ENCODE measurements at regions of chr3 and their contacts with region 1.

Region 1: DNA sequence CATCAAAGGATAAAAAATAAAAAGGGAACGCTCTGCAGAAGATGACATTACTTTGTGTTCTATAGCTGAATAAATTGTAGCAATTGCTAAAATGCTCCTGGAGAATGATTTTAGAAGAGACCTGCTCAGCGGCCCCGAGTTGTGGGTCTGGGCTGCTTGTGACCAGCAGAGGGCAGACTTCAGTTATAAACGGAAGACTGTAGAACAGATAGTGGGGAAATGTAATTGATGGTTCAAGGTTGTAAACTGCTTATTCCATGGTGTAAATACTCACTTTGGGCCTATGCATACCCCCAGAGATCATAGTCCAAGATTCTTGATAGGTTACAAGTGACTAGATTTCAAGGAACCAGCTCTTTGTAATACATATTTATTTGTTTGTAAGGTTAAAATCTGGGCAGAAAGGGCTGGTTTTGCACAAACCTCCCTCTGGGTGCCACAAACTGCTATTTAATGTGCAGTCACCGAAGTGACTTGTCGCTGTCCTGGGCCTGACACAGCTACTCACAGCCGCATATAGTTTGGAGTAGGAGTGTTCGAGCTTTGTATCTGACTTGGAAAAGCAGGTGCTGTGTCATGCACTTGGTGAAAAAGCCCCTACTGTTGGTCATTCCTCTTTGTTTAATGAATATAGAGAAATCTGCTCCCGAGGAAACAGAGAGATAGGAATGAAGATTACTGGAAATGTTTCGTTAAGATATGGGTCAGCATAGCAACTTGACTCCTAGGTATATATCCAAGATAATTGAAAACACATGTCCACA is 34.7 kb upstream of the NDUFB4 start:
- DNase-seq: peak; percentile 66
- ATAC-seq: peak; percentile 47 to 55
- H3K4me3 ChIP-seq: no peak overlapping the region
- H3K27ac ChIP-seq: no peak overlapping the region
- H3K4me1 ChIP-seq: peaks cover 34% of the 10 kb centered on the region
- H3K27me3 ChIP-seq: no peaks in the 10 kb centered on the region
- CTCF ChIP-seq: peak; percentile 93

Region 2: DNA sequence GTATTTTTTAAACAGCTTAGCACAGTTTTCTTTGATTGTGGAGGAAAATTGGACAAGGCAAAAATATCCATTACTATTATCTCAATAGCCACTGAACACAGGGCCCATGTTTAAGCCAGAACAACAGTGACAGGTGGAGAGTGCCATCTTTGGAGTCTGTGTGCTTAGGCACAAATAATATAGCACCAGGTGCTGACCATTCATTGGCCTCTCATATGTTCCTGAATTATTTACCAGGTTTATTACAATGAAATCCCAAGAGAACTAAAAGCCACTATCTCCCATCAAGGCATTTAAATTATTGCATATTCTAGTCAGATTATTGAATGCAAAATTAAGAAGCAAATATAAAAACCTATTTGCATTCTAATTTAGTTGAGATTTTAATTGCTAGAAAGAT is 316.0 kb before region 1 on chr3:
- intact Hi-C with region 1: loop called (anchors 10 kb)
- DNase-seq: no peak
- ATAC-seq: no peak
- H3K4me3 ChIP-seq: no peak overlapping the region
- H3K27ac ChIP-seq: no peak overlapping the region
- H3K4me1 ChIP-seq: no peaks in the 10 kb centered on the region
- H3K27me3 ChIP-seq: no peaks in the 10 kb centered on the region
- CTCF ChIP-seq: no peak

Region 3: GRCh38 chr3:120661118-120661935 is 99.9 kb after region 1 on chr3:
- intact Hi-C with region 1: no loop called
- DNase-seq: no peak
- ATAC-seq: no peak
- H3K4me3 ChIP-seq: no peak overlapping the region
- H3K27ac ChIP-seq: no peak overlapping the region
- H3K4me1 ChIP-seq: no peaks in the 10 kb centered on the region
- H3K27me3 ChIP-seq: no peaks in the 10 kb centered on the region
- CTCF ChIP-seq: no peak

Region 4: DNA sequence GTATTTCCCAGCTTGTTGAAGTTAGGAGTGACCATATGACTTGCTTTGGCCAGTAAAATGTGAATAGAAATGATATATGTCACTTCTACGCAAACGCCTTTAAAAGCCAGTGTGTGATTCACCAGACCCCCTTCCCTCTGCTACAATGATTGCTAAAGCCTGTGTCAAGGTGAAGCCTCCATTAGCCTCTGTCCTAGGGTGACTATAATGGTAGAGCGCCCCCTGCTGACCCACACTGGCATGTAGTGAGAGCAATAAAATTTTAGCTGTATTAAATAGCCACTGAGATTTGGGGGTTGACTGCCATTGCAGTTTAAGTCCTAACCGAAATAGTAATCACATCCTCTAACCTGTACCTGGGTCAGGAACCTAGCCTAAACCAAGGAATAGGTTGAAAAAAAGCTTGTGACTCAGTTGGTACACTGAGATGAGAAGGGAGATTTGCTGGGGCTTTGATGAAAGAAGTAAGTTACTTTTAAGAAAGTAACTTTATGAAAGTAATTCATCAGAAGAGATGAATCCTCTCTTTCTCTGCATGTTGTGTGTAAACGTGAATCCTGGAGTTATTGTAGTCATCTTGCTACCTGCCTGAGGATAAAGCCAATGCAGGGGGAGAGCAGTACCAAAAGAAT is 233.7 kb after region 1 on chr3:
- intact Hi-C with region 1: loop called (anchors 10 kb)
- DNase-seq: peak; percentile 83
- ATAC-seq: peak; percentile 90 to 93
- H3K4me3 ChIP-seq: no peak overlapping the region
- H3K27ac ChIP-seq: no peak overlapping the region
- H3K4me1 ChIP-seq: no peaks in the 10 kb centered on the region
- H3K27me3 ChIP-seq: no peaks in the 10 kb centered on the region
- CTCF ChIP-seq: peak; percentile 74

Measured in lower lobe of right lung (tissue), 2 donors.